ENCODE measurements at regions of chr1 and their contacts with region 1.

Region 1: GRCh38 chr1:84143796-84144565 is at the start of gene PRKACB:
- DNase-seq: no peak
- H3K4me3 Mint-ChIP-seq: peak within 1 kb of the TSS; percentile 90
- H3K27ac Mint-ChIP-seq: peak within 1 kb of the TSS; percentile 95
- H3K4me1 Mint-ChIP-seq: peaks cover 30% of the 10 kb centered on the region
- H3K27me3 Mint-ChIP-seq: no peaks in the 10 kb centered on the region
- total RNA-seq, gene PRKACB: 74.7 to 77.4 TPM

Region 2: GRCh38 chr1:84060781-84061180 is 83.2 kb before region 1 on chr1:
- CTCF ChIA-PET with region 1: no interaction called
- POLR2A ChIA-PET with region 1: no interaction called
- DNase-seq: no peak
- H3K4me3 Mint-ChIP-seq: no peak overlapping the region
- H3K27ac Mint-ChIP-seq: no peak overlapping the region
- H3K4me1 Mint-ChIP-seq: no peaks in the 10 kb centered on the region
- H3K27me3 Mint-ChIP-seq: peaks cover 14% of the 10 kb centered on the region

Region 3: GRCh38 chr1:84077476-84078107 is 66.4 kb before region 1 on chr1:
- CTCF ChIA-PET with region 1: no interaction called
- POLR2A ChIA-PET with region 1: interaction called, 11 read pairs
- DNase-seq: peak; percentile 73
- H3K4me3 Mint-ChIP-seq: peak overlapping the region; percentile 78
- H3K27ac Mint-ChIP-seq: peak overlapping the region; percentile 59
- H3K4me1 Mint-ChIP-seq: peaks cover 12% of the 10 kb centered on the region
- H3K27me3 Mint-ChIP-seq: peaks cover 10% of the 10 kb centered on the region

Region 4: DNA sequence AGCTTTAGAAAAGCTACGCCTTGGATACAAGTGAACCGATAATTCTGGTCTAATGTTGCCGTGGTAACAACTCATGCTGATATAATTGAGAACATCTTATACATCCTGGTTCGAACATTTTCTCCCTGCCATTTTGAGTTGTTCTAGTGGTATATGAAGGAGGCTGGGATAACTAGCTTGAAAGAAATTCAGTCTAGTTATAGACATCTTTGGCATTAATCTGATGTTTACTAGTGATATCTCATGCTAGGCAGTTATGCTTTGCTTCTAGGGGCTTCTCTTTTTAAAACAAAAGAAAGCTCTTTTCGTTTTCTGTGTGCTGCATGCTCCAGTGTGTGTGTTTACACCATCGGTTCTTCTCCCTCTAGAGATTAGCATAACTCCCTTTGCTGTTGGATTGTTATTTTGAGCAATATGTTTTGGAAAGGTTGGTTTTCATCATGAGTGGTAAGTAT is 20.6 kb after region 1 on chr1:
- CTCF ChIA-PET with region 1: interaction called, 3 read pairs
- POLR2A ChIA-PET with region 1: interaction called, 32 read pairs
- DNase-seq: no peak
- H3K4me3 Mint-ChIP-seq: no peak overlapping the region
- H3K27ac Mint-ChIP-seq: no peak overlapping the region
- H3K4me1 Mint-ChIP-seq: peaks cover 47% of the 10 kb centered on the region
- H3K27me3 Mint-ChIP-seq: no peaks in the 10 kb centered on the region

Region 5: DNA sequence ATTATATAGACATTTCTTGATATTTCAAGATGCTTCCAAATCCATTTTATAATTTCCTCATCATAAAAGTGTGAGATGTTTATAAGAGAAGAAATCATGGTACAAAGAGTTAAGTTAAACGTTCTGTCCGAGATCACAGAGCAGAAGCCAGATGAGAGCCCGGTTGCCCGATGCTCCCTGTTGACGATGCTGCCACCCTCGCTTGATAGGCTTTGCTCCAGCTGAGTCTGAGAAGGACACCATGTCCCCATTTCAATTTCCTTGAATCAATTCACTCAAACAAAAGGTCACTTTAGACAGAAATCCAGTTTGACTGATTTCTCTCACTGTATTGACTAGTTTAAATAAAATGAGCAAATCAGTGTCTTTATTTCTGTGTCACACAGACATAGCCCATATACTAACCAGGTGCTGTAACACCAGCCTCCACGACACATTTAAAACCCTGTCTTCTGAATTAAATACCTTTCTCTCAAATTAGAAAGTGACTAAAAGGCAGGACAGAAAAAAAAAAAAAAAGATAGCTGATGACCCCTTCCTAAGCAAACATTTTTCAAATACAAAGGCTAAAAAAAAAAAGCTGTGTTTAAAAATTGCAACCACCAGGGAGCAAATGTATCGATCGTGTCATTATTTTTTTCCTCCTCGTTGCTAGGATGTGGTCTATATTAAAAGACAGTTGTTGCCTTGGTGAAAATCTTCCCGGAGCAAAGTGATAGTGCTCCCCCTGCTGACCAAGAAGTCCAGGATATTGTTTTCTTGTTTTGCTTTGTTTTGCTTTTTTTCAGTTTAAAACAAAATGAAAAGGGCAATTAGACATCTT is 289.5 kb after region 1 on chr1:
- CTCF ChIA-PET with region 1: interaction called, 81 read pairs
- POLR2A ChIA-PET with region 1: interaction called, 70 read pairs
- DNase-seq: peak; percentile 60
- H3K4me3 Mint-ChIP-seq: peak overlapping the region; percentile 47
- H3K27ac Mint-ChIP-seq: peak overlapping the region; percentile 1
- H3K4me1 Mint-ChIP-seq: peaks cover 10% of the 10 kb centered on the region
- H3K27me3 Mint-ChIP-seq: no peaks in the 10 kb centered on the region

Region 6: DNA sequence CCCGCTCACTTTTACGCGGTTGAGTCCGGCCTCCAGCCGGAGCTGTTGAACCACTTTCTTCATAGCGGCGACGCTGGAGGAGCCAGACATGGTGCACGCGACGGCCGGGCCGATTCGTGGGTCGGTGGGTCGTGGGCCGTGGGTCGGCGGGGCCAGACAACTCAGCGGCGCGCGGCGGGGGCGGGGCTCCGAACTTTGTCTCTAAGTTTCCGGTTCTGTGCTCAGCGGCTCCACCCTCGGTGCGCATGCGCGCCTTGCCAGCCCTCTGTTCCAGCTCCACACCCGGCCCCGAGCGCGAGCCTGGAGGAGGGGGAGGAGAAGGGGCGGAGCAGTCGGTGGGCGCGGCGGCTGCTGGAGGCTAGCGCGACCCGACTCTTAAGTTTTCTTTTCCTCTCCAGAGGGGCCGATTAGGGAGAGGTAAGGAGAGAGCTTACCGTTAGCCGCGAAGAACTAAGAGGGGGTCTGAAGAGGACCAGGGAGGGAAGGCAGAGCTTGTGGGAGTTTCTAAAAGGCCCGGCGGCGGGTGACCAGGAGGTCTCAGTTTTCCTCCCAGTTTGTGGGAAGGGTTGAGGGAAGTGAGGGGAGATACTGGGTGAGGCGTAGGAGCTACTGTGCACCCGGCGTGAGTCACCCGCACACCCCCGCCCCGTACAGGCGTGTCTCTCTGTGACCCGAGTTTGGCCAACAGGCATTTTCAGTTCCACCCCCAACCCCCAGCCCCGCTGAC is 362.2 kb after region 1 on chr1 and contains the starts of genes GNG5 and SPATA1:
- CTCF ChIA-PET with region 1: interaction called, 8 read pairs
- POLR2A ChIA-PET with region 1: interaction called, 58 read pairs
- DNase-seq: peak; percentile 98
- H3K4me3 Mint-ChIP-seq: peak within 1 kb of the TSS; percentile 95
- H3K27ac Mint-ChIP-seq: peak within 1 kb of the TSS; percentile 97
- H3K4me1 Mint-ChIP-seq: peaks cover 43% of the 10 kb centered on the region
- H3K27me3 Mint-ChIP-seq: no peaks in the 10 kb centered on the region
- total RNA-seq, gene GNG5: 122 to 127 TPM
- total RNA-seq, gene SPATA1: 4.0 to 4.7 TPM

Region 7: DNA sequence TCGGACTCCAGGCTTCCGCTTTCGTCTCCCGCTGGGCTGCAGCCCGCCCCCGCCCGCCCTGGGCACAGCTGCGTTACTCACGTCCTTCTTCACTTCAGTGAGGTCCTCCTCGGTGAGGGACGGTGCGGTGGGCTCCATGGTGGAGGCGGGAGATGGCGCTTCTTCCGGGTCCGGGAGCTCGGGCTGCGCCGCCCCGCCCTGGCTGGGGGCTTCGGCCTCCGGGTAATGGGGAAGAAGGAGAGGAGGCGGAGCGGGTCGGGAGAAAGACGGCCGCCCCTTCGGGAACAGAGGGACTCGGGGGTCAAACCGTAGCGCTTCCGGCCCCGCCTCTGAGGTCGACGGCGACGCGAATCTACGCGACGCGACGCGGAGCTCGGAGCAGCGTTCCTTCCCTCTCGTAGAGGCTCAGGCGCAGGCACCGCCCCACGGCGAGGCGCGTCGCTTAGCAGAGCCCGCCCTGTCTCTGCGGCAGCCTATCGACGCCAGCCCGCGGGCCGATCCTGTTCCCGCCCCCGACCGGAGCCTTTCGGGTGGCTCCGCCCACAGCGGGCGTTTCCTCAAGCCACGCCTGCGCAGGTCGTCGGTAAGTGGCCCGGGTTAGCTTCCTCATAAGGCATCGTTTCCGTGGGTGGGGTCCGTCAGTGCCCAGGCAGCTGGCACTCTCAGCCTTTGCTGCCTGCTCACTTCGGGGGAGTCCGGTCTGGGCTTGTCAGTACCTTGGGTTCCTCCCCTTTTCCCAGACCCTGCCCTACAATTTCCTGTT is 1132.4 kb after region 1 on chr1 and contains the start of gene BCL10:
- CTCF ChIA-PET with region 1: no interaction called
- POLR2A ChIA-PET with region 1: interaction called, 12 read pairs
- DNase-seq: peak; percentile 99
- H3K4me3 Mint-ChIP-seq: peak within 1 kb of the TSS; percentile 80
- H3K27ac Mint-ChIP-seq: peak within 1 kb of the TSS; percentile 80
- H3K4me1 Mint-ChIP-seq: peaks cover 53% of the 10 kb centered on the region
- H3K27me3 Mint-ChIP-seq: peaks cover 26% of the 10 kb centered on the region
- total RNA-seq, gene BCL10: 24.3 to 30.1 TPM

Measured in activated CD4-positive, alpha-beta memory T cell treated with anti-CD3 and anti-CD28 coated beads, Interleukin-2, amount 10 ng/mL, durations not matched to agents 7 days and 5 days (primary cell).